ENCODE measurements at regions of chr21 and their contacts with region 1.

Region 1: DNA sequence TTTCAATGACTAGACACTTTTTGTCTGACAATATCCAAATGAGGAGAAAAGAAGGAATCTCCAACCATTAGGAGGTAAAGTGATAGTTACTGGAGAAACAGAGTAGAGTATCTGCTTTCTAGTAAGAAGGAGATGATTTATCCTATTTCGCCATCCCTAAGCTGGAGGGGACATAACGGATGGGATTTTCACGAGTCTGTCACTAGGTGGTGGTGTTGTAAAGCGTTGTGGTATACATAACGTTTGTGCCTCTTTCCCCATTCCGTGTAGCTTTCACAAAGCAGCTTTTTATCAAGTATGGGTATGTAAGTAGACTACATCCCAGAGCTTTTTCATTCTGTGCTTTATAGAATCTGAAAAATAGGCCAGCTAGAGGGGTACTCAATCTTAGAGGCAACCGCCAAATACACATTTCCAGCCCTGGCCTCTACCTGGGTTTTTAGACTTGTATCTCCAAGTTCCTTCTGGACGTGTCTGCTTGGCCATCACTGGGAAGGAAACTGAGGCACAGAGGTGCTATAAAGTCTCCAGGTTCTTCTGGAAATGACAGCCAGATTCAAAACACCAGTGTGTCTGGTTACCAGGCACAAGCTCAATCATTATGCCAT is 33.3 kb upstream of the FAM3B start:
- DNase-seq: no peak

Region 2: DNA sequence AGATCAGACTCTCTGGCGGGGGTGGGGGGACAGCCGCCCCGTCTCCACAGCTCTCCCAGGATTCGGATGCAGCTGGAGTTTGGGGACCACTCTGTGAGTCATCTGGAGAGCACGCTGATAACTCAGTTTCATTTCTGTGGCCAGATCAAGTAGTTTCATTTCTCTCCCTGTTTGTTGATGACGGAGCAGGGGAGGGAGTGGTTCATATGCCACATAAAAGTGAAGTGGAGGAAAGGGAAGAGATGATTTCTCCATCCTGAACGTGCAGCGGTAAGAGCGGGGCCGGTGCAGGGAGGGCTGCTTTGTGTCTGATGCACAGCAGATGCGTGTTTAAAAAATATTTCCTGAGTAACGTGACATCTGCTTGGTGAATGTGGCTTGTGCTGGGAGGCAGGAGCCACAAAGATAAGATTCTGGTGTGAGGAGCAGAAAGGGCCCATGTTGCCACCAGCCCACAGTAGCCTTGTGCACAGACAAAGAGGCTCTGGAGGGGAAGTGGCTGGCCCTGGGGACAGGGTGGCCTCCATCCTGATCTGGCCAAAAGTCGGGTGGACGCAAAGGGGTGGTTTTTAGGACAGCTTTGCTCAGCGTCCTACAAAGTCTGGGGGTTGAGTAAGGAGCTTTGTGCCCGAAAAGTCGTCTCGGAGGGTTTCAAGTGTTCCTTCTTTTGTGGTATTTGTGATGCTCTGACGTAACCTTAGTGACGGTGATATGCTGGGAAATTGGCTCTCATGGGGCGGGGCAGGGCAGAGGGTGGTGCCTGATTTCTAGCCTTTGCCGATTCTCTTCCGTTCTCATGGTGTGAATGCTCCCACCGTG is 78.7 kb after region 1 on chr21 and contains the start of gene MX2:
- intact Hi-C with region 1: loop called (anchors 5 kb)
- DNase-seq: peak; percentile 90
- total RNA-seq, gene MX2: 5.0 TPM

Region 3: DNA sequence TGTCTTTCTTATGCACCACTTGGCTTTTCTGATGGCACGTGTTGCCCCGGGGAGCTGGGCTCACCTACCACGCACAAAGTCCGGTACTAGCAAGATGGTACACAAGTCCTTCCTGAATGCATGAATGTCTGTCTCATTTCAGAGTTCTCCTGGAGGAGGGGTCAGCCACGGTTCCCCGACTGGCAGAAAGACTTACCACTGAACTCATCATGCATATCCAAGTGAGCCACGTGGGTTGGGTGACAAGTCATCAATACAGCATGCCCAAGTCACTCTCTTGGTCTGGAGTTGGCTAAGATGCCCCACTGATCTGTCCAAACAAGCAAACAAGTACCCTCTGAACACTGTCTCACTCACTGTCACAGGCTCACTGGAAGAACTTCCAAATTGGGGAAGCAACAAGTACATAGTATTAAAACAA is 114.2 kb after region 1 on chr21:
- intact Hi-C with region 1: no loop called
- DNase-seq: no peak

Region 4: GRCh38 chr21:41460578-41461527 is 177.5 kb after region 1 on chr21:
- intact Hi-C with region 1: loop called (anchors 2 kb)
- DNase-seq: peak; percentile 82

Region 5: GRCh38 chr21:41786485-41786987 is 503.2 kb after region 1 on chr21:
- intact Hi-C with region 1: no loop called
- DNase-seq: no peak